Activated naive CD4-positive, alpha-beta T cell treated with anti-CD3 and anti-CD28 coated beads for 36 hours (primary cell): ENCODE measurements at regions of chr15 and their contacts with region 1.

Region 1: DNA sequence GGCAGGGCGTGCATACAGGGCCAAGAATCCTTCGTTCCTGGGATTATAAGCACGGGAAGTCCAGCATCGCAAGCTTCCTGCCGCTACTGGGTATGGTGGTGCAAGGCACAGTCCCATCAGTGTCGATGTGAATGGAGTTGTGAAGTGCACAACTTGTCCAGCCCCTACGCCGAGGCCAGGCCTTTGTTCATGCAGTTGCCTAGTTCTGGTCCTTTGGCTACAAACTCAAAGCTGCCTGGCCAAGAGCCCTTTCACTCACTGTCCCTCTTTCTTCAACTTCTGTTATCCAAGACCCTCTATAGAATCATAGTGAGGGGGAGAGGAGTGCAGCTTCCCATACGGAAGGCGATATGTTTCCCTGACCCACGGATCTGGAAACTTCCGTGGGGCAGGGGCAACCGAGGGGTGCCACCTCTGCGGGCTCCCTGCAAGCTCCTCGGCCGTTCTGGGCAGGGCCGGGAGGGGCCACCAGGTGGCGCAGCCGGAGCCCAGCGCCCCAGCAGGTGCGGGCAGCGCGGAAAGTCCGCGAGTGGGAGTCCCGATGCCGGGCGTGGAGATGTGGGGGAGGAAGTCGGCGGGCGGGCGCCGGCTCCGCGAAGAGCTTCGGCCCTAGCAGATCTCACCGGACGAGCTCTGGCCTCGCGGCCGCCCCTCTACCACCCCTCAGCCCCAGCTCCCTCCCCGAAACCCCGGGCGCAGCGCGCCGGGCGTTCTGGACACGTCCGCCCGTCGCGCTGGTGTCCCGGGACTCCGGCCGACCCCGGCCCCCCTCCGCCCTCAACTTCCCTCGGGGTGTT is 693 bp downstream of the RASGRP1 start:
- DNase-seq: peak; percentile 88
- H3K4me3 Mint-ChIP-seq: peak overlapping the region; percentile 96
- H3K27ac Mint-ChIP-seq: peak overlapping the region; percentile 98
- H3K4me1 Mint-ChIP-seq: peaks cover 55% of the 10 kb centered on the region
- H3K27me3 Mint-ChIP-seq: no peaks in the 10 kb centered on the region

Region 2: DNA sequence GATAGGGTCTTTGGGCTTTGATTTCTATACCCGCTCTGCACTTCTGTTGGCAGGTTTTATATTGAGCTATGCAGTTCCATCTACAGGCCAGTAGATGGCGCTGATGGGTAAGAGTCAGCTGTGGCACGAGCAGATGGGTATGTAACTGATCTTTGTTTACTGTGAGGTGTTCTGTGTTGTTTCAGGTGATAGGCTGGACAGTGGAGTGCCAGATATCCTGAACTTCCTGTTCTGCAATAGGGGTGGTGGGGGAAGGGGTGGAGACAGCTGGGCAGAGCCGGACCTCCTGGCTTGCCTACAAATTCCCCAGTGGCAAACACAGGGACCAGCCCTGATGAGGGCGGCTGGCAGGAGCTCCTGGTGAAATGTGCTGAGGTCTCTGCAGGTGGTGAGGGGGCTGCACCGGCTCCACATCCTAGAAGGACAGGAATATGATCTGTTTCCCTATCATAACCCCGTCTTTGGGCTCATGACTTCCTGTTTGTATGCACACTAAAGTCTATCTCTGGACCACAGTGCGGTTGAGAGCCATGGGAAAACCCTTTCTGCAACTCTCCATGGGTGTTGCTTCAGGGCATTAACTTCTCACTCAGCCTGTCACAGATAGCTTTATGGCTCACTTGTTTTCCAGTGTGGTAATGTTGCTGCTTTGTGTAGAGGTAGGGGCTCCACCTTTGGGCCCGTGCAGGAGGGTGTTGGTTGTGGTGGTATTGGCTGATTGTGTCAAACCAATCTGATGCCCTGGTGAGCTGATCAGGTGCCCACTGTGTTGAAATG is 123.4 kb before region 1 on chr15:
- CTCF ChIA-PET with region 1: interaction called, 9 read pairs
- intact Hi-C with region 1: loop called (anchors 2 kb)
- DNase-seq: peak; percentile 64
- H3K4me3 Mint-ChIP-seq: no peak overlapping the region
- H3K27ac Mint-ChIP-seq: no peak overlapping the region
- H3K4me1 Mint-ChIP-seq: peaks cover 4% of the 10 kb centered on the region
- H3K27me3 Mint-ChIP-seq: no peaks in the 10 kb centered on the region

Region 3: DNA sequence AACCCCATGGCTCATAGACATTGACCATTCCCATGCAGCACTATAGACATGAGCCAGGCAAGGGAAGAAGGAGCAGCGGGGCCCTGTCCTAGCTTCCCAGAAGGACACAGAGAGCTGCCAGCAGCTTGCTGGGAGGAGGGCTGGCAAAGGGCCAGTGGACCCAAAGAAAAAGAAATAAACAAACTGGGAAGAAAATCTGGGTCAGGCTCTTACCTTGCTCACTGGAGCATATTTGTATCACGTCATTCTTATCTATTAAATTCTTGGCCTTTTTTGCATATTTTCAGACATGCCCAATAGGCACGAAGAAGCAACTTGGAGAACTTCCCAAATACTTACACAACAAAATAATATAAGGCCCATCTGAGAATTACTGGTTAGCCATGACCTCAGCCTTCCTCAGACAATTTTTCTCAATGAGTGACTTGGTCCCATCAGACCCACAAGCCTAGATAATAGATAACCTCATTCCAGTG is 27.7 kb before region 1 on chr15:
- CTCF ChIA-PET with region 1: interaction called, 10 read pairs
- intact Hi-C with region 1: no loop called
- DNase-seq: no peak
- H3K4me3 Mint-ChIP-seq: no peak overlapping the region
- H3K27ac Mint-ChIP-seq: peak overlapping the region; percentile 26
- H3K4me1 Mint-ChIP-seq: peaks cover 96% of the 10 kb centered on the region
- H3K27me3 Mint-ChIP-seq: no peaks in the 10 kb centered on the region

Region 4: DNA sequence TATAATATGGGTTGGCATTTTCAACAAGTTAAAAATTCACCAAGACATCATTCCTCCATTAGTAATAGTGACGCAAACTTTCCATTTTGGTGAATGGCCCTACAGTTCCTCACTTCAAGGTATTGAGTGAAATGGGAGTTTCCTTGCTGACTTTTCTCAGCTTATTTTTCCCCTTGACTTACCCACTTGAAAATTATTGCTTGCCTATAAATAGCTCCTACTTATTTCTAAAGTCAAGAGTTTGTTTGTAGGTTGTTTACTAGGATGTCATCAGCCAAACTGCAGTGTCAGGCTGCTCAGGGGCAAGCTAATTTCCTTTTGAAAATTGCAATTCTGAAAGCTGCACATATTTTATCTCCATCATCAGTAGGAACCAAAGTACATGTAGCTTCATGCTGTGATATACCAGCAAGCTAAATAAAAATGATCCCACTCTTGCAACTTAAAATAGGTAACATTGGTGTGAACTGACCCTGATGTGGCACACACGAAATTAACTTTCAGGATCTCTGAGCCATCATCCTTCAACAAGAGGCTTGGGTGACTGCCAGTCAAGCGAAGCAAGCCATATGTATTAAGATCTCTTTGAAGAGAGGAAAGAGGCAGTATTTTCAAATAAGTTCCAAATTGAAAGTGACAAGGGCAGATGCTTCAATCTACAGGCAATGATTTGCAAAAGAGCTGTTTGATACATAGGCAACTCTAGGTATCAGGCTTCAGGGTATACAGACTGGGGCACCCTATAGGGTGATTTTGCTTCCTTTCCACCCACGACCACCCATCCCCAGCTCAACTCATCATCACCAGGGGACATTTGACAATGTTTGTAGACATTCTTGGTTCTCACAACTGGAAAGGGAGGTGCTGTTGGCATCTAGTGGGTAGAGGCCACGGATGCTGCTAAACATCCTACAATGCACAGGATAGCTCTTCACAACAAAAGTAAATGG is 67.5 kb after region 1 on chr15:
- CTCF ChIA-PET with region 1: interaction called, 16 read pairs
- intact Hi-C with region 1: loop called (anchors 1 kb)
- DNase-seq: peak; percentile 27
- H3K4me3 Mint-ChIP-seq: peak overlapping the region; percentile 30
- H3K27ac Mint-ChIP-seq: peak overlapping the region; percentile 85
- H3K4me1 Mint-ChIP-seq: peaks cover 50% of the 10 kb centered on the region
- H3K27me3 Mint-ChIP-seq: no peaks in the 10 kb centered on the region

Region 5: DNA sequence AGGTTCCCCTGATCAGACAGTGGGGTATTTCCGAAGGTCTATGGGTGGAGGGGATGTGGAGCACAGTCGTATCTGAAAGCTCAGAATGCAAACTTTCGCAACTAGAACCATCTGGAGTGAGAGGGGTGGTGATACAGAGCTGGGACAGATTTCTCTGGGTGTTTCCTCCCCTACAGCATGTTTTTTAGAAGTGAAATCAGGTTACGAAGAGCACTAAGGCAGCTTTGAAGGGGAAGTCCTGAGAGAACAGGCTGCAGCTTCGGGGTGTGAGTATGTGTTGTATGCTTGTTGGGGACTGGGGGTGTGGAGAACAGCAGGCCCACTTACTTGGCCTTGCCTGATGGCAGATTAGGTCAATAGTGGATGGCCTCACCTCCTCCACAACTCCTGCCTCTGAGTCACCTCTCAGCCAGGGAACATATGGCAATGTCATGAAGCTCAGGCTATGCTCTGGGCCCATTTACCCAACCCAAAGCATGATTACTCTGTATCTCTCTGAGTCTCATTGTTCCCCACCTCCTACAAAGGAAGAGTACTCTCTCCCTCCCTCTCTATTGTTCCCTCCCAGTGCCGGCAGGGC is 107.8 kb after region 1 on chr15:
- CTCF ChIA-PET with region 1: interaction called, 59 read pairs
- intact Hi-C with region 1: loop called (anchors 1 kb)
- DNase-seq: peak; percentile 69
- H3K4me3 Mint-ChIP-seq: peak overlapping the region; percentile 54
- H3K27ac Mint-ChIP-seq: peak overlapping the region; percentile 94
- H3K4me1 Mint-ChIP-seq: peaks cover 69% of the 10 kb centered on the region
- H3K27me3 Mint-ChIP-seq: no peaks in the 10 kb centered on the region

Region 6: DNA sequence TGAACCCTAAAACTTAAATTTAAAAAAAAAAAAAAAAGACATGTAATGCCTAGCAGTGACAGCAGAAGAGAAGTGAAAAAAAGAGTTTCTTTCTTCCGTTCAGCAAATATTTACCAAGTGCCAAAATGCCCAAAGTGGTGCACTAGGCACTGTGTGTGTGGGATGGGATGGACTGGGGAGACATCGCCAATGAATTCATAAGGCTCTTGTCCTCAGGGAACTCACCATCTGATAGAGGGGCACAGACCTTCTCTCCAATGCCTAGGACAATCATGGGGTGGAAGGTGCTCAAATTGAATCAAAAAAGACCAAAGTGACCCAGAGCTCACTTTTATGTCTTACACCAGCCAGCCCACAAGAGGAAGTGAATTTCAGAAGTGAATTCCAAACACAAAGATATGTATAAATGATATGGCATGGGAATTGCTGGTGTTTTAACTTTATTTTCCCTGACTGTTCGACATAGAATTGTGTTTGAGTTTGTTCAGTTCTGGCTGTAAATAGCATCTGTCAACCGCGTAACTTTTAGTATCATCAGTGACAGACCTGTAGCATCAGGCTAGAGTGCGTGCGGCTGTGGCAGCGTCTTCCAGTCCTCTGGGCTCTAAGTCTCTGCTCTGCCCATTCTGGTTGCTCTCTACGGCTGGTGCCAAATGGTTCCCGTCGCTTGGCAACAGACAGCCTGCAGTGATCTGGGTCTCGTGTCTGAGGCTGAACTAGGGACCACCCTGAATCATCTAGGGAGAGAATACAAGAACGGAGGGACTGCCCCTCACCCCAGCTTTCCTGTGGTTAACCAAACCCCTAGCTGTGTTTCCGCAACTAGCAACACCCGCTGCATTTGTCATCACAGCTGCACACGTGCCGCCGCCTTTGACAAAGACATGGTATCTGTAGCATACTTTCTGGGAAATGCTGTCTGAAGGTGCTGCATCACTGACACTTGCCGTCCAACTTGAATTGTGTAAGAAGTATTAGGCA is 862.9 kb after region 1 on chr15:
- CTCF ChIA-PET with region 1: no interaction called
- intact Hi-C with region 1: loop called (anchors 10 kb)
- DNase-seq: peak; percentile 95
- H3K4me3 Mint-ChIP-seq: peak overlapping the region; percentile 17
- H3K27ac Mint-ChIP-seq: no peak overlapping the region
- H3K4me1 Mint-ChIP-seq: peaks cover 38% of the 10 kb centered on the region
- H3K27me3 Mint-ChIP-seq: peaks cover 26% of the 10 kb centered on the region